Right ventricle myocardium superior (tissue), 1 donor: ENCODE measurements at regions of chr3 and their contacts with region 1.

Region 1: GRCh38 chr3:50192689-50193141 is 1.3 kb downstream of the GNAT1 start:
- DNase-seq: peak; percentile 80
- ATAC-seq: peak; percentile 54

Region 2: GRCh38 chr3:50121416-50122032 is 71.2 kb before region 1 on chr3:
- intact Hi-C with region 1: loop called (anchors 1 kb)
- DNase-seq: peak; percentile 78
- ATAC-seq: peak; percentile 87

Region 3: DNA sequence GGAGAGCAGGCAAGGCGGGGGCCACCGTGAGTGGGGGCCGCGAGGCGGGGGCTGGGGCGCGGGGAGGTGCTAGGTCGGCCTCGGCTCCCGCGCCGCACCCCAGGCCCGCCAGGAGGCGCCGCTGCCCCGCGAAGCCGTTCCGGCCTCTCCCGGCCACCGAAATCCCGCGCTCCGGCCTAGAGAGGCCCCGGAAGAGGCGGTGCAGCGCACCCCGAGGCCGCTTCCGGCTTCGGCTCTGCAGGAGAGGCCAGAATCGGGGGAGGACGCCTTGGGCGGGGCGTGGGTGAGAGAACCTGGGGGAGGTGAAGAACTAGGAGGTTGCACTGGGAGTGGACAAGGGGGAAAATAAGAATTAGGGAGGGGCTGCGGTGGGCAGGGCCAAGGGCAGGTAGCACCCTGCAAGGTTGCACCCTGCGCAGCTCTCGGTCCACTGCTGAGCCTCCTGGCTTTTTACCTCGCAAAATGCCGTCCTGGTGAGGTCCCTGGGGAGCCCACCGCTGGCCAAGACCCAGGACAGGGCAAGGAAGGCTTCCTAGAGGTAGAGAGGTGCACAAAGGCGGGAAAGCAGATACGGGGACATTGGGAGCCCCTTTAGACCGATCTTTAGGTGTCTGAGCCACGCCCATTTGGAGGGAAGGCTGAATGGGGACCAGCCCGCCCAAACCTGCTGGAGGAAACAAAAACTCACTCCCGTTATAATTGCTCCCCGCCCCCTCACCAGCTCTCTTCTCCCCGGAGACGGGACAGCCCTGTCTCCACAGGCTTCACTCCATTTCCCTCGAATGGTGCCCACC is 34.9 kb after region 1 on chr3:
- intact Hi-C with region 1: loop called (anchors 2 kb)
- DNase-seq: peak; percentile 96
- ATAC-seq: peak; percentile 94